Activated CD8-positive, alpha-beta T cell treated with anti-CD3 and anti-CD28 coated beads, Interleukin-2, amount 10 ng/mL, durations not matched to agents 7 days and 5 days (primary cell): ENCODE measurements at regions of chr7 and their contacts with region 1.

Region 1: GRCh38 chr7:29189743-29190201 is 4.8 kb upstream of the CHN2 start:
- DNase-seq: peak; percentile 72
- ATAC-seq: peak; percentile 54
- H3K4me3 Mint-ChIP-seq: no peak overlapping the region
- H3K27ac Mint-ChIP-seq: no peak overlapping the region
- H3K4me1 Mint-ChIP-seq: no peaks in the 10 kb centered on the region
- H3K27me3 Mint-ChIP-seq: peaks cover 42% of the 10 kb centered on the region

Region 2: GRCh38 chr7:29156907-29157452 is 32.8 kb before region 1 on chr7:
- CTCF ChIA-PET with region 1: interaction called, 23 read pairs
- POLR2A ChIA-PET with region 1: no interaction called
- DNase-seq: peak; percentile 21
- ATAC-seq: no peak
- H3K4me3 Mint-ChIP-seq: no peak overlapping the region
- H3K27ac Mint-ChIP-seq: peak overlapping the region; percentile 50
- H3K4me1 Mint-ChIP-seq: peaks cover 11% of the 10 kb centered on the region
- H3K27me3 Mint-ChIP-seq: peaks cover 15% of the 10 kb centered on the region

Region 3: DNA sequence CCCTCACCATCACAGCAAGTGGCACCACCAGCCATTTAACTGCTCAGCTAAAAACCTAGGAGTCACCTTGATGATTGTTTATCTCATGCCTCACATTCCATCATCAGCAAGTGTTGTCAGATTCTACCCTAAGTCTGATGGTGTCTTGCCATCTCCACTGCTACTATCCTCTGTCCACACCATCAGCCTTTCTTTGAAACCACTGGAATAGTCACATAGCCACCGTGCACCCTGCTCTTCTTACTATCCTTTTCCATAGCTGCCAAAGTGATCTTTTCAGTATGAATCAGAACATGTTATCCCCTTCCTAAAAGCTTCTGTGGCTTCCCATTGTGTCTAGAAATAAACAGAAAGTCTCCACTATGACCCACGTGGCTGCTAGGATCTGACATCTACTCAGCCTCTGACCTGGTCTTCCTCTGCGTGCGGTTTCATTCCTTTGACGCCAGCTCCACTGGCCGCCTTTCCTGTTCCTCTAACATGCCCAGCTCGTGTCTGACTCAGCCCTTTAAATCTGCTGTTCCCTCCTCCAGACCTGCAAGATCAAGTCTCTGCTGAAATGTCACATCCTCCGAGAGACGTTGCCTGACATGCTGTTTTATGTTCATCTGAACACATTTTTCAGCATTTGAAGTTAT is 11.7 kb before region 1 on chr7:
- CTCF ChIA-PET with region 1: interaction called, 19 read pairs
- POLR2A ChIA-PET with region 1: no interaction called
- DNase-seq: peak; percentile 41
- ATAC-seq: peak; percentile 70
- H3K4me3 Mint-ChIP-seq: no peak overlapping the region
- H3K27ac Mint-ChIP-seq: no peak overlapping the region
- H3K4me1 Mint-ChIP-seq: peaks cover 8% of the 10 kb centered on the region
- H3K27me3 Mint-ChIP-seq: peaks cover 21% of the 10 kb centered on the region

Region 4: GRCh38 chr7:29239638-29240037 is 49.9 kb after region 1 on chr7:
- CTCF ChIA-PET with region 1: interaction called, 10 read pairs
- POLR2A ChIA-PET with region 1: no interaction called
- DNase-seq: peak; percentile 35
- ATAC-seq: no peak
- H3K4me3 Mint-ChIP-seq: no peak overlapping the region
- H3K27ac Mint-ChIP-seq: no peak overlapping the region
- H3K4me1 Mint-ChIP-seq: peaks cover 14% of the 10 kb centered on the region
- H3K27me3 Mint-ChIP-seq: peaks cover 10% of the 10 kb centered on the region

Region 5: GRCh38 chr7:29297194-29297890 is 107.6 kb after region 1 on chr7:
- CTCF ChIA-PET with region 1: interaction called, 15 read pairs
- POLR2A ChIA-PET with region 1: no interaction called
- DNase-seq: no peak
- ATAC-seq: no peak
- H3K4me3 Mint-ChIP-seq: no peak overlapping the region
- H3K27ac Mint-ChIP-seq: no peak overlapping the region
- H3K4me1 Mint-ChIP-seq: no peaks in the 10 kb centered on the region
- H3K27me3 Mint-ChIP-seq: peaks cover 11% of the 10 kb centered on the region

Region 6: DNA sequence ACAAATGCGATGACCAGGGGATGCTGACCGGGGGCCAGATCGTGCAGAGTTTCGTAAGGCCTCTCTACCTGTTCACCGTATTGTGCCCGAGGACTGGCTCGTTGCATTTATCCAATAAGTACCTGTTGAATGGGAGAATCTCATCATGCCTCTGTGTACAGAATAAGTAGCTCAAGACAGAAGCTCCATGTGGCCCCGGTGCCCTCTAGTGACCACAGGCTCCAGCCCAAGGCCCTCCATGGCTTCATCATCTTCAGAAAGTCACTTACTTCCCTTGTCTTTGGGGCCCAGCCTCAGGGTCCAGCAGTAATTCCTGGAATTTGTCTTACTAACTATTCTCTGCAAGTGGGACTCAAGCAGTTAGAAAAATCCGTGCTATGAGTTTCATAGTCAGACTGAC is 155.8 kb after region 1 on chr7:
- CTCF ChIA-PET with region 1: interaction called, 36 read pairs
- POLR2A ChIA-PET with region 1: no interaction called
- DNase-seq: peak; percentile 50
- ATAC-seq: peak; percentile 61
- H3K4me3 Mint-ChIP-seq: no peak overlapping the region
- H3K27ac Mint-ChIP-seq: no peak overlapping the region
- H3K4me1 Mint-ChIP-seq: no peaks in the 10 kb centered on the region
- H3K27me3 Mint-ChIP-seq: peaks cover 4% of the 10 kb centered on the region

Region 7: DNA sequence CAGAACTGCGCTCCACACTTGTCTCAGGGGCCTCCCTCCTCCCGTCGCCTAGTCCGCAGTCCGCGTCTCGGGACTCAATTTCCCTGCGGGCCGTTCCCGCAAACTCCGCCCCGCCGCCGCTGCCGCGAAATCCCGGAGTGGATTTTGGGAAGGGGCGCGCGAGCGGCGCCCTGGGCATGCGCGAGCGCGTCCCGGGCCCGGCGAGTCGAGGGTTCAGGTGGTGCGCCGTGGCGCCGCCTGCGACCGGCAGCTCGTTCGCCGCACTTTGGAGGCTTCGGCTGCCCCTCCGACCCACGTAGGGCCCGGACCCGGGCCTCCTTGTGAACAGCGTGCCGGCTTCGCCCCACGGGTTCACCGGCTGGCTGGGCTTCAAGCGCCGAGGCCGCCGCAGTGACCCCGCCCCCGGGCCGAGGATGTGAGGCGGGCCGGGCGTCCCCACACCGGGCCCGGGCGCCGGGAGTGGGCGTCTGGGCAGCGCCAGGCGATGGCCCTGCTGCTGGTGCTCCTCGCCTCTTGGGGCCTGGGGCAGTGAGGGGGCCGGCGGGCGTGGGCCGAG is 838.5 kb after region 1 on chr7 and contains the start of gene PLEKHA8:
- CTCF ChIA-PET with region 1: no interaction called
- POLR2A ChIA-PET with region 1: no interaction called
- DNase-seq: peak; percentile 87
- ATAC-seq: peak; percentile 59
- H3K4me3 Mint-ChIP-seq: peak within 1 kb of the TSS; percentile 86
- H3K27ac Mint-ChIP-seq: peak within 1 kb of the TSS; percentile 86
- H3K4me1 Mint-ChIP-seq: peaks cover 33% of the 10 kb centered on the region
- H3K27me3 Mint-ChIP-seq: no peaks in the 10 kb centered on the region
- total RNA-seq, gene PLEKHA8: 8.9 to 11.5 TPM